Body of pancreas (tissue), 4 donors: ENCODE measurements at regions of chr1 and their contacts with region 1.

Region 1: DNA sequence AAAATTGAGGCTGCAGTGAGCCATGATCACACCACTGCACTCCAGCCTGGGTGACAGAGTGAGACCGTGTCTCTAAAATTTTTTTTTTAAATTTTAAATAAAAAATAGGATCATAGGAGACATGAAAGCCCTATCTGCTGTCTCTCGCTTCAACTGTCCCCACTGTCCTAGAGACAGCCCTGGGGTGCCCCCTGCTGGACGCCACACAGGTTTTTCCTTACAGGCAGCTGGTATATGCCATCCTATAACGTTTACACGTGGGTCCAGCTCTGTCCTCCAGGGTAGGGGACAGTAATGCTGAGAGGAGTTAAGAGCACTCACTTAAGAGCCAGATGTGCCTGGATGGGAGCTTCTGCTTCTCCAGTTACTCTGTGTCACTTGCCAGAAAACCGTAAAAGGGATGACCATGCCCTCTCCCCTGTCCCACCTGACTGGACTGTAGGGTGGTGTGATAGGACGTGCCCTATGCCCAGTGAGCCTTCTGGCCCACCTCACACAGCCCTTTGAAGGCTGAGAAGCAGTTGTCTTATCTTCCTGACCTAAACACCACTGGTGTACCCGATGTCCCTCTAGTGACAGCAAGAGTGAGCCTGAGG is 8.5 kb downstream of the FBXO2 start:
- DNase-seq: peak; percentile 77 to 82 (median 80)
- ATAC-seq: no peak
- H3K4me3 ChIP-seq: no peak overlapping the region
- H3K27ac ChIP-seq: no peak overlapping the region
- H3K4me1 ChIP-seq: peaks cover 27% of the 10 kb centered on the region
- H3K27me3 ChIP-seq: no peaks in the 10 kb centered on the region
- CTCF ChIP-seq: peak; percentile 36 to 62 (median 59)
- POLR2A ChIP-seq: no peak

Region 2: GRCh38 chr1:11248155-11248554 is 397.6 kb before region 1 on chr1:
- intact Hi-C with region 1: loop called (anchors 10 kb)
- DNase-seq: no peak
- ATAC-seq: no peak
- H3K4me3 ChIP-seq: no peak overlapping the region
- H3K27ac ChIP-seq: no peak overlapping the region
- H3K4me1 ChIP-seq: no peaks in the 10 kb centered on the region
- H3K27me3 ChIP-seq: no peaks in the 10 kb centered on the region
- CTCF ChIP-seq: no peak
- POLR2A ChIP-seq: no peak

Region 3: GRCh38 chr1:11719313-11720032 is 73.7 kb after region 1 on chr1:
- intact Hi-C with region 1: loop called (anchors 5 kb)
- DNase-seq: peak; percentile 82 to 87 (median 85)
- ATAC-seq: peak; percentile 86
- H3K4me3 ChIP-seq: no peak overlapping the region
- H3K27ac ChIP-seq: peak overlapping the region in 3 of 4 donors; percentile 11 to 71 (median 63)
- H3K4me1 ChIP-seq: peaks cover 12% of the 10 kb centered on the region
- H3K27me3 ChIP-seq: no peaks in the 10 kb centered on the region
- CTCF ChIP-seq: peak; percentile 88 to 96 (median 95)
- POLR2A ChIP-seq: peak in 2 of 3 donors; percentile 6 to 28

Region 4: DNA sequence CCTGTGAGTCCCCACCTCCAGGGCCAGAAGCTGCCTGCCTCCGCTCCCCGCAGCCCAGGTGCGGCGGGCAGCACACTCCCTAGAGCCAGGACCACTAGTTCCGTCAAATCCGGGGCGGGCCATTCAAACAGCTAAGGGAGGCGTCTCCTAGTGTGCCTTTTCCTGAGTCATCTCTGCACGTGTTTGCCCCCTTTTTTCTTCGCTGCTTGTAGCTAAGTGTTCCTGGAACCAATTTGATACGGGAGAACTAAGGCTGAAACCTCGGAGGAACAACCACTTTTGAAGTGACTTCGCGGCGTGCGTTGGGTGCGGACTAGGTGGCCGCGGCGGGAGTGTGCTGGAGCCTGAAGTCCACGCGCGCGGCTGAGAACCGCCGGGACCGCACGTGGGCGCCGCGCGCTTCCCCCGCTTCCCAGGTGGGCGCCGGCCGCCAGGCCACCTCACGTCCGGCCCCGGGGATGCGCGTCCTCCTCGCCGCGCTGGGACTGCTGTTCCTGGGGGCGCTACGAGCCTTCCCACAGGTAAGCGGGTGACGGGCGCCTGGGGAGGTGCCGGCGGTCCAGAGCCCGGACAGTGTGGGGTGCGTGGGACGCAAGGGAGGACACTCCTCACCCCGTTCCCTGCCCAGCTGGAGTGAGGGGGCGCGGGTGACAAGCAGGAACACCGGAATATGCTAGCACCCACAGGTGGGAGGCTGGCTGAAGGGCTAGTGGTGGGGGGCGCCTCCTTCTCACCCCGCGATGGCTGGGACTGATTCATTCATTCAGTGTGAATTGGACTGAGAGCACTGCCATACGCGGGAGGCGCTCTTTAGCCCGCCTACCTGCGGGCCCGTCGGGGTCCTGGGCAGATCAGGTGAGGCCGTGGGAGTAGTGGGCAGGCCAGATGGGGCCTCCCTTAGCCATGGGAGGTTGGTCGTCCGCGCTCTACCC is 417.6 kb after region 1 on chr1 and contains the start of gene TNFRSF8:
- intact Hi-C with region 1: no loop called
- DNase-seq: no peak
- ATAC-seq: no peak
- H3K4me3 ChIP-seq: no peak within 1 kb of the TSS
- H3K27ac ChIP-seq: no peak within 1 kb of the TSS
- H3K4me1 ChIP-seq: no peaks in the 10 kb centered on the region
- H3K27me3 ChIP-seq: peaks cover 0 to 20% of the 10 kb centered on the region in 2 donors
- CTCF ChIP-seq: no peak
- POLR2A ChIP-seq: no peak
- total RNA-seq, gene TNFRSF8: not detected